ENCODE measurements at regions of chr15 and their contacts with region 1.

Region 1: GRCh38 chr15:78461171-78461888 is 23.3 kb downstream of the IREB2 start:
- DNase-seq: no peak
- H3K4me3 ChIP-seq: peak overlapping the region in 2 of 4 experiments; percentile 6 to 8; a peak in 1 of 8 replicates
- H3K27ac ChIP-seq: 0 out of 2 replicates have a peak overlapping the region, but pooled peaks have one; percentile 11
- H3K4me1 ChIP-seq: peaks cover 0 to 10% (median under 1%) of the 10 kb centered on the region in 4 experiments; a peak in 1 of 7 replicates
- H3K27me3 ChIP-seq: no peaks in the 10 kb centered on the region
- CTCF ChIP-seq: no peak
- EP300 ChIP-seq: no peak
- POLR2A ChIP-seq: no peak
- RAD21 ChIP-seq: no peak

Region 2: GRCh38 chr15:78340231-78341056 is 120.9 kb before region 1 on chr15 and contains the start of gene CRABP1:
- CTCF ChIA-PET with region 1: no interaction called
- POLR2A ChIA-PET with region 1: no interaction called
- DNase-seq: peak in 1 of 2 experiments; percentile 84
- H3K4me3 ChIP-seq: peak within 1 kb of the TSS; percentile 39 to 78 (median 66)
- H3K27ac ChIP-seq: no peak within 1 kb of the TSS
- H3K4me1 ChIP-seq: peaks cover 2 to 17% (median 8%) of the 10 kb centered on the region in 4 experiments; a peak in 5 of 7 replicates
- H3K27me3 ChIP-seq: peaks cover 0 to 24% (median 16%) of the 10 kb centered on the region in 4 experiments; a peak in 5 of 7 replicates
- CTCF ChIP-seq: no peak
- EP300 ChIP-seq: no peak
- POLR2A ChIP-seq: peak; percentile 42 to 64; a peak in 2 of 3 replicates
- RAD21 ChIP-seq: 0 out of 4 replicates have a peak, but pooled peaks of 1 of the 2 experiments have one; percentile 12
- total RNA-seq, gene CRABP1: 385 and 388 TPM in 2 replicates

Region 3: GRCh38 chr15:78481917-78482316 is 20.6 kb after region 1 on chr15:
- CTCF ChIA-PET with region 1: interaction called, 13 read pairs
- POLR2A ChIA-PET with region 1: interaction called, 6 read pairs
- DNase-seq: no peak
- H3K4me3 ChIP-seq: no peak overlapping the region
- H3K27ac ChIP-seq: no peak overlapping the region
- H3K4me1 ChIP-seq: no peaks in the 10 kb centered on the region
- H3K27me3 ChIP-seq: no peaks in the 10 kb centered on the region
- CTCF ChIP-seq: no peak
- EP300 ChIP-seq: no peak
- POLR2A ChIP-seq: no peak
- RAD21 ChIP-seq: no peak

Region 4: GRCh38 chr15:78750566-78750965 is 289.2 kb after region 1 on chr15:
- CTCF ChIA-PET with region 1: no interaction called
- POLR2A ChIA-PET with region 1: no interaction called
- DNase-seq: no peak
- H3K4me3 ChIP-seq: 0 out of 8 replicates have a peak overlapping the region, but pooled peaks of 1 of the 4 experiments have one; percentile 32
- H3K27ac ChIP-seq: no peak overlapping the region
- H3K4me1 ChIP-seq: no peaks in the 10 kb centered on the region
- H3K27me3 ChIP-seq: no peaks in the 10 kb centered on the region
- CTCF ChIP-seq: no peak
- EP300 ChIP-seq: no peak
- POLR2A ChIP-seq: no peak
- RAD21 ChIP-seq: no peak

Measured in H1 (cell line).